Mucosa of descending colon (tissue), 3 donors: ENCODE measurements at regions of chr2 and their contacts with region 1.

Region 1: DNA sequence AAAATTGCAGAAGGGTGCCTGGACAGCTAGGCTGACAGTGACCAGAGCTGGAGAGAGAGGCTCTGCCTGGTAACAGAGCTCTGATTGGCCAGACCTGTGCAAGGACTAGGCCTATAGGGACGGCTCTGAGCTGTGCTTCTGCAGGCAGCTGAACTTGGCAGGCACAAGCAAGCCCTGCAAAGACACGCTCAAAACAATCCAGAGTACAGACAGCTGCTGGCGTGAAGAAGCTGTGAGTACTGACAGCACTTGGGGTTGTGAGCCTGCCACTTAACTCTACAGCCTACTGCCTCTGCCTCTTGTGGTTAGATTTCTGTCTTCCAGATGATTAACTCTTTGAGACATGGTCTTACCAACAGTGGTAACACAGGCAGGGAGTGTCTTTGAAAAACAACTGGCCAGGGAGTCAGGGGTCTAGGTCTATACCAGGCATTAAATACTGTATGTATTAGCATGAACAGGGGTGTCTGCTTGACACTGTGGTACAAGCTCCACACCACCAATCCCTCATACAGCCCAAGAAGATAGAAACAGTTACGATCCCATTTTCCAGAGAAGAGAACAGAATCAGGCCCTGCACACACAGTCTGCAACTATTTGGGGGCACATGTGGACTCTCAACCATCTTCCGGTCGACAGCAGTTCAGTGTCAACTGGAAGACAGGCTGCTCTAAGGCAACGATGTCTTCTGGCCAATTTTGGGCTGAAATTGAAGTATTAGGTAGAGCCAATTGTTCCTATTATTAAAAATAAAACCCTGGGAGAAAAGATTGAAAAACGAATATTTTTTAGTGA is 568.4 kb downstream of the TNS1 start:
- DNase-seq: peak; percentile 61 to 72 (median 71)
- ATAC-seq: peak; percentile 93
- H3K4me3 ChIP-seq: no peak overlapping the region
- H3K4me1 ChIP-seq: no peaks in the 10 kb centered on the region
- CTCF ChIP-seq: no peak

Region 2: DNA sequence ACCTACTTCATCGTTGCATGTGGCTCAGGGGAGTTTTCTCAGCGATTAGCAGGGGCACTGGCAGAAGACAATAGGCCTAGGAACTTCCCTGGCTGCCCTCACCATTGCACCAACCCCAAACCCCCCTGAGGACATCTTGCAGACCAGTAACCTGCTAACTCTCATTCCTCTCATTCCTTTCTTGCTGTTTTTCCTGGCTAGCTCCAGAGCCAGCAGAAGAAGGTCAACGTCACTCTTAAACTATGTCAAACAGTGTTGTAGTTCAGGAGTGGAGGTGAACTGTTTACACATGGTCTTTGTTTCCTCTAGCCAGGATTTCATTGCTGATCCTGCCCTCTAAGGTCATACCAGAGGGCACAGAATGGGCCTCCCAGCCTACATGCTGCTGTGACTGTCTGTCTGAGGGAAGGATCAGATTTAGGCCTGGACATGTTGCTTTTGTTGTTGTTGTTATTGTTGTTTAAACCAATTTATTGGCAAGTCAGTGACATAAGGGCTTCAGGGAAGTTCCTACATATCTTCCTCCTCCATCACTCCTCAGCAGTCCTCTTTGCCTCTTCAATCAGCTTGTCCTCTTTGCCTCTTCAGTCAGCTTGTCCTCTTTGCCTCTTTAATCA is 102.7 kb before region 1 on chr2:
- intact Hi-C with region 1: loop called in 1 of 2 experiments (anchors 10 kb)
- DNase-seq: no peak
- ATAC-seq: no peak
- H3K4me3 ChIP-seq: no peak overlapping the region
- H3K4me1 ChIP-seq: no peaks in the 10 kb centered on the region
- CTCF ChIP-seq: no peak

Region 3: DNA sequence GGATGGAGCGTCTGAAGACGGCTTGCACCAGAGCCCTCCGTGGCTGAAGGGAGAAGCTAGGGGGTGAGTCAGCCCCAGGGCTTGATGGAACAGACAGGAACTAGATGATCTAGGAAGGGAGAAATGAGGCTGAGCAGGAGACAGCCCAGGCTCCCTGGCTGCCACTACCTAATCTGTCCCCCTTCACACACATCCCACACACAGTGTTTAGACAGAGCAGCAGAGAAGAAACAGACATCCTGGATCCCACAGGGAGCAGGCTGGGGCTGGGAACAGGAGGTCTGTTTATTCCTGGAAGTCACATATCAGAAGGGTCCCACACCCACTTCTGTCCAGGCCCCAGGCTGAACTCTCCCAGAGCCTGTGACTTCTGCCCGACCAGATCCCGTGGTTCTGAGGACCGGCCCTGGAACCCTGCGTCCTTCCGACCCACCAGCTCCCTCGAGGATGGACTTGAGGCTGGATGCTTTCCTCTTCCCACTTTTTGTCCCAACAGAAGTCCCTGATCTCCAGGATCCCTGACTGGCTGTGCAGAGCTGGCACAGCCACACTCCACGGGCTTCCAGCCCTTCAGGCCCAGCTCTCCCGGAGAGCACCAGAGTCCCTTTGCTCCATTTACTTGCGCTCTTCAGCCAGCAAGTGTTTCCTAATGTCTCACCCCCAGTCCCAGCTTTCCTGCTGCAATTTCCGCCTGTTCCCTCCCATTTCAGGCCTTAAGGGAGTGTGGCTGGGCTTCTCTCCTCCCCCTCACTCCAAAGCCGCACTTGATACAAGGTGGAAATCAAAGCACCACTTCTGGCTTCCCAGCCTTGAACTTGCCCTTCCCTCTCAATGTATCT is 825.0 kb after region 1 on chr2:
- intact Hi-C with region 1: no loop called
- DNase-seq: no peak
- ATAC-seq: peak; percentile 3
- H3K4me3 ChIP-seq: no peak overlapping the region
- H3K4me1 ChIP-seq: peaks cover 38% of the 10 kb centered on the region
- CTCF ChIP-seq: no peak